Aorta (tissue), 5 donors: ENCODE measurements at regions of chr17 and their contacts with region 1.

Region 1: DNA sequence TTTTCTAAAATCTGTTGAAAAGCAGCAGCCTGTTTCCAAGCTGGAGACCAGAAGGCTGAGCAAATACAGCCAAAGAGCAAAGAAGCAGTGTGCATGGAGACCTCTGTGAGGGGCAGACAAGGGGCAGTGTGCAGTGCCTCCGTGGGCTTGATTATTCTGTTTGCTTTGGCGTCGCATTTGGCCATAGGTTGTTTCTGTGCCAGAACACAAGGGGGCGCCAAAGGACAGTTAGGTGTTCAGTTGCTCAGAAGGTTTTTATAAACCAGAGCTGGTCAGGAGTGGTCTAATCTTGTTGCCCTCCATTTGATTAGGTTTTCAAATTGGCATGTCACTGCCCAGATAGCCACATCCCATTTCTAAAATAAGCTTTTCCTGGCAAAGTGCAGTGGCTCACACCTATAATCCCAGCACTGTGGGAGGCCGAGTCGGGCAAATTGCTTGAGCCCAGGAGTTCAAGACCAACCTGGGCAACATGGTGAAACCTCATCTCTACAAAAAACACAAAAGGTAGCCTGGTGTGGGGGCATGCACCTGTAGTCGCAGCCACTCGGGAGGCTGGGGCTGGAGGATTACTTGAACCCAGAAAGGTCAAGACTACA is 10.6 kb downstream of the MYH3 start:
- DNase-seq: peak; percentile 78 to 92
- ATAC-seq: peak; percentile 84
- H3K4me3 ChIP-seq: no peak overlapping the region
- H3K27ac ChIP-seq: no peak overlapping the region
- H3K4me1 ChIP-seq: no peaks in the 10 kb centered on the region
- H3K27me3 ChIP-seq: no peaks in the 10 kb centered on the region

Region 2: DNA sequence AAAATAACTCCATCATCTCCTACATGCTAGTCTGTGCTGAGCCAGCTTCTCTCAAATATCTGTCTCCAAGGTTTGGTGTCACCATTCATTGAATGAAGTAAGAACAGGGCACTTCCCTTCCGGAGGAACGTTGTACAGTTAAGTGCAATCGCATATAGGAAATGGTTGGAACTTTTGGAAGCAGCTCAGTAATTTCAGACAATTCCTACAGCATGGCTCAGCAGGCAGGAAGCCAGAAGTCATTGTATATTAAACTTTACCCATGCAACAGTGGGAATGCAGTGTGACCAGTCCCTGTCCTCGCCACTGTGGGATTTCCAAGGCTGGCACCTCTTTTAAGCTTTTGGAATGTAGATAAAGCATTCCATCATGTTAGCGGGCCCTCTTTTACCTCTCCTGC is 45.9 kb before region 1 on chr17:
- intact Hi-C with region 1: no loop called
- DNase-seq: no peak
- ATAC-seq: no peak
- H3K4me3 ChIP-seq: no peak overlapping the region
- H3K27ac ChIP-seq: no peak overlapping the region
- H3K4me1 ChIP-seq: no peaks in the 10 kb centered on the region
- H3K27me3 ChIP-seq: peaks cover 0 to 1% of the 10 kb centered on the region in 2 donors

Region 3: DNA sequence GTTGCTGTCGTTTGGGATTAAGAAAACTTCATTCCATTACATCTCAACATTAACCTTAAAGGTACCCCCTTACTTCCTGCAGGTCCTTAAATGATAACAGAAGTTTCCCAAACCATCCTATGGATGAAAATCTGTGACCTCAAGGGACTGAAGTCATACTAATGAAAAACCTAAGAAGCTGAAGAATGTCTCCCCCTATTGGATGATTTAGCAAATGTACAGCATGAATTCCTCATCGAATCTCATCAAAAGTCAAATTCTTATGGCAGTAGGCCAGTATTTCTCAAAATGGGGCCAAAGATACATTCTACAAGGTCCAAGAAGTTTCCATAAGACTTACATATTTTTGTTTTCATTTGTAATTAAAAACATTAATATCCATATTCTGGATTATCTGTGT is 37.4 kb after region 1 on chr17:
- intact Hi-C with region 1: loop called in 1 of 2 experiments (anchors 5 kb)
- DNase-seq: no peak
- ATAC-seq: no peak
- H3K4me3 ChIP-seq: no peak overlapping the region
- H3K27ac ChIP-seq: peak overlapping the region; percentile 43 to 90
- H3K4me1 ChIP-seq: peaks cover 0 to 1% of the 10 kb centered on the region in 2 donors
- H3K27me3 ChIP-seq: no peaks in the 10 kb centered on the region

Region 4: DNA sequence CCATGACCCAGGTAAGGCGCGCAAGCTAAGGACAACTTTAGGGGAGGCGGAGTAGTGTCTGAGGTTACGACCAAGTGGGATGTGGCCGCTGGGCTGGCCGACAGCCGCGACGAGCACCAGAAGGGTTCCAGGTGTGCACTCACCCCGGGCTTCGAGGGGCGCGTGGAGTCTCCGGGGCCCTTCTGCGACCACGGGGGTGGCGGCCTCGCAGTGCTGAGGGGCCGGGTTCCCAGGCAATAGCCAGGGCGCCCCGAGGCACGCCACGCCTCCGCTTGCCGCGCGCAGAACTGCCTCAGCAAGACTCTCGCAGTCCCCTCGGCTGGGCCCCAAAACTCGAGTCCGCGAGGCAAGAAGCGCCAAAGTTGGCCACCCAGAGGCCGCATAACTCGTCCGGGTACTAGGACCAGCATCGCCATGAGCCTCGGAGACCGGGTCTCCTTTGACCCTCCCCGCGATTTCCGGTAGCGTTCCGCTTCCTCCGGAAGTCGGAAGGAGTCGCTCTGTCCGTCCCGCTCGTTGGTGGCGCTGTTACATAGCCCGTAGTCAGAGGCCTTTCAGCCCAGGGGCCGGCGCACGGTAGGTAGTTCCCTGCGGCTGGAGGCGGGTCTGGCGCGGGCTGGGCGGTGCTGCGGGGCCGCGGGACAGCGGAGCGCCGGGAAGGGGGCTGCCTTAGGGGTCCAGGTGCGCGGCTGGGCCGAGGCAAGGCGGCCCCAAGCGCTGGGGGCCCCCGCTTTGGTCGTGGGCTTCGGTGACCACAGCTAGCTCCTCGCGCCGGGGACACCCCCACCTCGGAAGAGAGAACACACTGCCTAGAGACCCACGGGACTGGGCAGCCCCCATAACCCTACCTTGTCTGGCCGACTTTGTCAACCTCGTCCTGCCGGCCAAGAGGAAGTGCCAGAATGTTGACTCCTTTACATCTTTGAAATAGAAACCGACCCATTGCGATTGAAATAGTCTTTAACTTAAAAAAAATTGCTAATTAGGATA is 50.9 kb after region 1 on chr17 and contains the starts of genes ADPRM and SCO1:
- intact Hi-C with region 1: loop called in 1 of 2 experiments (anchors 5 kb)
- DNase-seq: peak; percentile 97
- ATAC-seq: peak; percentile 98
- H3K4me3 ChIP-seq: peak within 1 kb of the TSS; percentile 65 to 88
- H3K27ac ChIP-seq: peak within 1 kb of the TSS; percentile 30 to 78
- H3K4me1 ChIP-seq: peaks cover 0 to 4% of the 10 kb centered on the region in 2 donors
- H3K27me3 ChIP-seq: no peaks in the 10 kb centered on the region
- total RNA-seq, gene ADPRM: 10.3 to 14.1 TPM
- total RNA-seq, gene SCO1: 22.8 to 24.4 TPM

Region 5: GRCh38 chr17:10729334-10730193 is 83.1 kb after region 1 on chr17 and contains the start of gene TMEM220:
- intact Hi-C with region 1: loop called in 1 of 2 experiments (anchors 5 kb)
- DNase-seq: peak; percentile 88 to 93
- ATAC-seq: peak; percentile 96
- H3K4me3 ChIP-seq: peak within 1 kb of the TSS; percentile 39 to 70
- H3K27ac ChIP-seq: peak within 1 kb of the TSS; percentile 76 to 87
- H3K4me1 ChIP-seq: no peaks in the 10 kb centered on the region
- H3K27me3 ChIP-seq: no peaks in the 10 kb centered on the region
- total RNA-seq, gene TMEM220: 15.4 to 17.4 TPM

Region 6: GRCh38 chr17:10844621-10845387 is 198.3 kb after region 1 on chr17:
- intact Hi-C with region 1: loop called (anchors 2 kb)
- DNase-seq: peak; percentile 80 to 89
- ATAC-seq: peak; percentile 95
- H3K4me3 ChIP-seq: peak overlapping the region; percentile 4 to 89
- H3K27ac ChIP-seq: no peak overlapping the region
- H3K4me1 ChIP-seq: no peaks in the 10 kb centered on the region
- H3K27me3 ChIP-seq: no peaks in the 10 kb centered on the region